Prostate gland (tissue), 2 donors: ENCODE measurements at regions of chr16 and their contacts with region 1.

Region 1: GRCh38 chr16:636206-637080 is at the start of gene METTL26:
- DNase-seq: peak; percentile 95
- H3K4me3 ChIP-seq: peak within 1 kb of the TSS; percentile 49 to 64
- H3K27ac ChIP-seq: peak within 1 kb of the TSS; percentile 97
- H3K4me1 ChIP-seq: peaks cover 9% of the 10 kb centered on the region
- H3K27me3 ChIP-seq: no peaks in the 10 kb centered on the region
- CTCF ChIP-seq: peak in 2 of 4 experiments; percentile 28 to 32
- POLR2A ChIP-seq: peak; percentile 58
- total RNA-seq, gene METTL26: 179 to 207 TPM

Region 2: DNA sequence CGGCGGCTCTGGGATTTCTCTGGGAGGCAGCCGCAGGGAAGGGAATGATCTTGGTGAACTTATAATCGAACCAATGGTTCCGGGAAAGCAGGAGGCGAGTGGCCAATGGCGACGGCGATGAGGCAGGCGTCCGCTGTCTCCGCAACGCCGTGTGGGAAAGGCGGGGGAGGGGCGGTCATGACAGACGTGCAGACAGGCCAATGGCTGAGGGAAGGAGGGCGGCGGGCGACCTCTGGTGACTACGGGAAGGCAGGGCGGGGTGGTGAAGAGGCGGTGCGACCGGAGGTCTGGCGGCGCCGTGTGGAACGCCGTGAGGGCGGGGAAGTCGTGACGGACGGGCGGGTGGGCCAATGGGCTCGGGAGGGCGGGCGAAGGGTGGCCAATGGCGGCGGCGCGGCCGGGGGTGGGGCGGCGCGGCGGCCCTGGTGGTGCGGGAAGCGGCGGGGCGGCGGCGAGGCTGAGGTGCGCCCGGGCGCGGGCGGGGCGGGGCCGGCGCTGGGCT is 46.7 kb before region 1 on chr16 and contains the start of gene RAB40C:
- intact Hi-C with region 1: loop called (anchors 2 kb)
- DNase-seq: peak; percentile 99
- H3K4me3 ChIP-seq: peak within 1 kb of the TSS; percentile 70 to 87
- H3K27ac ChIP-seq: peak within 1 kb of the TSS; percentile 95 to 98
- H3K4me1 ChIP-seq: peaks cover 16% of the 10 kb centered on the region
- H3K27me3 ChIP-seq: no peaks in the 10 kb centered on the region
- CTCF ChIP-seq: peak in 1 of 4 experiments; percentile 22
- POLR2A ChIP-seq: no peak
- total RNA-seq, gene RAB40C: 41.8 to 68.0 TPM